Vagina (tissue), 2 donors: ENCODE measurements at regions of chr4 and their contacts with region 1.

Region 1: GRCh38 chr4:157983300-157983699 is 189.5 kb downstream of the GASK1B start:
- DNase-seq: no peak
- H3K4me3 ChIP-seq: no peak overlapping the region
- H3K27ac ChIP-seq: no peak overlapping the region
- H3K4me1 ChIP-seq: no peaks in the 10 kb centered on the region
- H3K27me3 ChIP-seq: no peaks in the 10 kb centered on the region
- CTCF ChIP-seq: no peak
- POLR2A ChIP-seq: no peak

Region 2: GRCh38 chr4:157217708-157218107 is 765.6 kb before region 1 on chr4:
- intact Hi-C with region 1: loop called (anchors 10 kb)
- DNase-seq: no peak
- H3K4me3 ChIP-seq: no peak overlapping the region
- H3K27ac ChIP-seq: no peak overlapping the region
- H3K4me1 ChIP-seq: peaks cover 11% of the 10 kb centered on the region
- H3K27me3 ChIP-seq: peaks cover 10% of the 10 kb centered on the region
- CTCF ChIP-seq: no peak
- POLR2A ChIP-seq: no peak

Region 3: GRCh38 chr4:157908031-157908430 is 75.3 kb before region 1 on chr4:
- intact Hi-C with region 1: no loop called
- DNase-seq: no peak
- H3K4me3 ChIP-seq: no peak overlapping the region
- H3K27ac ChIP-seq: no peak overlapping the region
- H3K4me1 ChIP-seq: no peaks in the 10 kb centered on the region
- H3K27me3 ChIP-seq: no peaks in the 10 kb centered on the region
- CTCF ChIP-seq: no peak
- POLR2A ChIP-seq: no peak